ENCODE measurements at regions of chr6 and their contacts with region 1.

Region 1: GRCh38 chr6:13574149-13574570 is 241 bp upstream of the SIRT5 start:
- DNase-seq: peak; percentile 77
- H3K4me3 ChIP-seq: peak overlapping the region; percentile 81
- H3K27ac ChIP-seq: peak overlapping the region; percentile 73
- H3K27me3 ChIP-seq: no peaks in the 10 kb centered on the region
- CTCF ChIP-seq: peak; percentile 42

Region 2: DNA sequence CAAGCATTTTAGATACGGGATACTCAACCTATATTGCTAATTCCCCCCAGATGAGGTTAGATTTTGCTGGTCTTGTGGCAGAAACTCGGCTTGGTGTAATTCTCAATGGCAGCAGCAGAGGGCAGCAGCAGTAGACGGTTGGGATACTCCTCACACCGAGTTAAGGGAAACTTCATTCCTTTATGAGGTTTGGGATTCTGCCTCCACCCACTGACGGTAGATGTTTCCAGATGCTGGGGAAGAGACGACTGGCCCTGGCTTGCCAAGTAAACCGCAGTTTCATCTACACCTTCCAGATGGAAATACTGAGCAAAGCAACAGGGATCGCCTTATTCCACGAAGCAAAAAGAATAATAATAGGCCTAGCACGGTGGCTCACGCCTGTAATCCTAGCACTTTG is 237.6 kb before region 1 on chr6:
- CTCF ChIA-PET with region 1: interaction called, 18 read pairs
- POLR2A ChIA-PET with region 1: no interaction called
- DNase-seq: peak; percentile 87
- H3K4me3 ChIP-seq: no peak overlapping the region
- H3K27ac ChIP-seq: no peak overlapping the region
- H3K27me3 ChIP-seq: peaks cover 3% of the 10 kb centered on the region
- CTCF ChIP-seq: peak; percentile 91

Region 3: DNA sequence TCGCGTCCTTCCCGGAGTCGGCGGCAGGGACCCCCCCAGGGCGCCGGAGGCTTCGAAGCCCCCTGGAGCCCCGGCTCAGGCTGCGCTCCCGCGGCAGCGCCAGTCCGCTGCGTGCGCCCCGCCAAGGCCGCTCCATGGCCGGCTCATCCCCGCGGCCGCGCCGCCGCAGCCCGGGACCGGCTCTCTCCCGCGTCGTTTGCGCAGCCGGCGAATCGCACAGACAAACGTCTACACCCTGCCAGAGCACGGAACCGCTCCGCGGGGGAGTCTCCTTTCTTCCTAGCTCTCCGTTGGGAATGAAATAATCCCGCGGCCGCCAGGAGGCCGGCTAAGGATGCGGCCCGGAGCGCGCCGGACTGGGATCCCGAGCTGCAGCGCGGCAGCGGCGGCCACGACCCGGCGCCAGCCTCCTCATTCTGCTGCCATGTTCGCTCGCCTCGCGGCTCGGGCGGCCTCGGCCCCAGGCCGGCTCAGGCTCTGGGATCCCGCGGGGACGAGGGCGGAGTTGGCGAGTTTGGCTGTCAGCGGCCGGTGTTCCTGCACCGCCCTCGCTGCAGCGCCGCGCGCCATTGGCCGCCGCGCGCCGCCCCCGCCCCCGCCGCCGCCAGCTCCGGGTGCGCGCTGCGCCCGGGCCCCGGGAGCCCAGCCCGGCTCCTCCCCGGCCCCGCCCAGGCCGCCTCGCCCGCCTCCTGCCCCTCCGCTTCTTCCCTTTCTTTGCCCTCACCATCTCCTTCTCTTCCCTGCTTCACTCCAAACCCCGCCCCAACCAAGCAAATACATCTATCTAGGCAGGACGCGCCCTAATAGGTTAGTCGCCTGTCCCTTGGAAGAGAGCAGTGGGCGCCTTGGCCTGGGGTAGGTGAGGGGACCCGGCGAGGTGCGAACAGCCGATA is 86.8 kb before region 1 on chr6 and contains the start of gene GFOD1:
- CTCF ChIA-PET with region 1: interaction called, 8 read pairs
- POLR2A ChIA-PET with region 1: interaction called, 11 read pairs
- DNase-seq: peak; percentile 37
- H3K4me3 ChIP-seq: peak within 1 kb of the TSS; percentile 74
- H3K27ac ChIP-seq: peak within 1 kb of the TSS; percentile 31
- H3K27me3 ChIP-seq: no peaks in the 10 kb centered on the region
- CTCF ChIP-seq: peak; percentile 30; the same call in 1 of the 2 replicates
- polyA plus RNA-seq, gene GFOD1: 2.7 and 3.0 TPM in 2 replicates

Region 4: GRCh38 chr6:13548500-13549210 is 25.5 kb before region 1 on chr6:
- CTCF ChIA-PET with region 1: interaction called, 10 read pairs
- POLR2A ChIA-PET with region 1: no interaction called
- DNase-seq: no peak
- H3K4me3 ChIP-seq: no peak overlapping the region
- H3K27ac ChIP-seq: no peak overlapping the region
- H3K27me3 ChIP-seq: peaks cover 3% of the 10 kb centered on the region
- CTCF ChIP-seq: no peak

Region 5: DNA sequence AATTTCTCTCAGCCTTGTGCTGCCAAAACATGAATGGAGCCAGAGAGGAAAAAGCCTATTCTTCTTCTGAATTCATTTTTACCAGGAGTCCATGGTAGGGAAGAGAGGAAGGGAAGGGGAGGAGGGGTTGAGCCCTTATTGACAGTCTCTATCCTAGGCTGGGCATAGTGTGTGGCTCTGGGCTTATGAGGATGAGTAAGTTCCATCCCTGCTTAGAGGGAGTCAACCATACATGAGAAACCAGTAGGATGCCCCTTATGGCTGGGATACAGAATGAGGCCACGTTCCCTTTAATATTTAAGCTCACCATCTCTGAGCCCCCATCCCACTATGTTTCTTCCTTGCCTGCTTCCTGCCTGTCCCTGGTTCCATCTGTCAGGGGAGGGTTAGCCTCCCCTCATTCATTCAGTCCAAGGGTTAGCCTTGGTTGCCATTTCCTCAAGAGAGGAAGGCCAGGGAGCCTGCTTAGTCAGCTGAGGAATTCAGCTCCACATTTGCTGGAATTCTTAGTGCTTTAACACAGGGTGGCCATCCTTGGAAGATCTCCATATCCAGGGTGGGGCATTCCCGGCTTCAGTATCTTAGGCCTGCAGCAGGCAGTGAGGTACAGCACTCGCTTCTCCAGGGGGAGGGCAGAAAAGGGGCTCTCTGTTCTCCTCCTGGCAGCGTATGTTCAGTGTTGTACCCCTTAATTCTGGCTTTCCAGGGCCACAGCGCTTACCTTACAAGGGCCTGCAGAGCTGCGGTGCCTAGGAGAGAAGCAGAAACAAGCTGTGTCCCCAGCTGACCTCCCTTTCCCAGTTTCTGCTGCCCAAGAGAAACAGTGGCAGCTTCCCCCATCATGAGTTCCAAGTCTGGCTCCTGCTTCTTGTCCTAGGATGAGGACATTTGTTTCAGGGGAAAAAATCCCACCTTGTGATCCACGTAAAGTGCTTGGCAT is 12.7 kb after region 1 on chr6:
- CTCF ChIA-PET with region 1: interaction called, 28 read pairs
- POLR2A ChIA-PET with region 1: interaction called, 4 read pairs
- DNase-seq: no peak
- H3K4me3 ChIP-seq: no peak overlapping the region
- H3K27ac ChIP-seq: no peak overlapping the region
- H3K27me3 ChIP-seq: no peaks in the 10 kb centered on the region
- CTCF ChIP-seq: no peak

Region 6: DNA sequence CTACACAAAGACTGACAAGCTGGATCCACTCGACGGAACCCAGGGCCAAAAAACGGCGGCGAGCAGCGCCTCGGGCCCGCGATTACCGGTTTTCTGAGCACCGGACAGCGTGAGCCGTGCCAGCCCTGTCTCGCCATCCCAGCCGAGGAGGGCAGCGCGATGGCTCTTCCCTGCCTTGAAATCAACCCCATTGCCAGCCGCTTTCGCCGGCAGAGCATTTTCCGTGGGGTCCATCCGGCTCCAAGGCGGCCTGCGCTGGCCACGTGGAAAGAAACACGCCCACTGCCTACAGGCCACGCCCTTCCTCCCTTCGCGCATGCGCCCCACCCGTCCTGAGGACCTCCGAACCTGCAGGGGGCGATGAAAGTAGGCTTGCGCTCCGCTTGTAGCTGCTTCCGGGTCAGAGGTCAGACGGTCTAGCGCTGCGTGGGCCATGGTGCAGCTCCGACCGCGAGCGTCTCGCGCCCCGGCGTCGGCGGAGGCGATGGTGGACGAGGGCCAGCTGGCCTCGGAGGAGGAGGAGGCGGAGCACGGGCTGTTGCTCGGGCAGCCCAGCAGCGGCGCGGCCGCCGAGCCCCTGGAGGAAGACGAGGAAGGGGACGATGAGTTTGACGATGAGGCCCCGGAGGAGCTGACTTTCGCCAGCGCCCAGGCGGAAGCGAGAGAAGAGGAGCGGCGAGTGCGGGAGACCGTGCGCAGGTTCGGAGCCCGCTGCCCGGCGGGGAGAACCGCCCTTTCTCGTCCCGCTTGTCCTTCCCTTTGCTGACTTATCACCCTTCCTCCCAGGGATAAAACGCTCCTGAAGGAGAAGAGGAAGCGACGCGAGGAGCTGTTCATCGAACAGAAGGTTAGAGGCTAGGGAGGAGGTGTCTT is 41.0 kb after region 1 on chr6 and contains the start of gene NOL7:
- CTCF ChIA-PET with region 1: interaction called, 37 read pairs
- POLR2A ChIA-PET with region 1: interaction called, 30 read pairs
- DNase-seq: peak; percentile 98
- H3K4me3 ChIP-seq: peak within 1 kb of the TSS; percentile 98
- H3K27ac ChIP-seq: peak within 1 kb of the TSS; percentile 94
- H3K27me3 ChIP-seq: no peaks in the 10 kb centered on the region
- CTCF ChIP-seq: peak; percentile 87
- polyA plus RNA-seq, gene NOL7: 31.3 and 46.6 TPM in 2 replicates

Measured in AG04450 (cell line).